A549 (cell line): ENCODE measurements at regions of chr12 and their contacts with region 1.

Region 1: GRCh38 chr12:109518820-109519665 is 41.6 kb downstream of the UBE3B start:
- DNase-seq: peak; percentile 48 to 80
- ATAC-seq: peak; percentile 64 to 91; a peak in 4 of 6 replicates
- H3K4me3 ChIP-seq: no peak overlapping the region
- H3K27ac ChIP-seq: no peak overlapping the region
- H3K4me1 ChIP-seq: no peaks in the 10 kb centered on the region
- CTCF ChIP-seq: peak; percentile 86
- EP300 ChIP-seq: no peak
- POLR2A ChIP-seq: no peak
- RAD21 ChIP-seq: peak; percentile 74 to 82

Region 2: GRCh38 chr12:109504068-109504467 is 15.0 kb before region 1 on chr12:
- CTCF ChIA-PET with region 1: interaction called, 33 read pairs
- POLR2A ChIA-PET with region 1: no interaction called
- DNase-seq: no peak
- ATAC-seq: no peak
- H3K4me3 ChIP-seq: no peak overlapping the region
- H3K27ac ChIP-seq: no peak overlapping the region
- H3K4me1 ChIP-seq: no peaks in the 10 kb centered on the region
- CTCF ChIP-seq: no peak
- EP300 ChIP-seq: no peak
- POLR2A ChIP-seq: no peak
- RAD21 ChIP-seq: no peak

Region 3: GRCh38 chr12:109763201-109763841 is 244.3 kb after region 1 on chr12:
- CTCF ChIA-PET with region 1: interaction called, 10 read pairs
- POLR2A ChIA-PET with region 1: no interaction called
- DNase-seq: peak in 1 of 2 experiments; percentile 60
- ATAC-seq: peak; percentile 53 to 64
- H3K4me3 ChIP-seq: no peak overlapping the region
- H3K27ac ChIP-seq: no peak overlapping the region
- H3K4me1 ChIP-seq: no peaks in the 10 kb centered on the region
- CTCF ChIP-seq: no peak
- EP300 ChIP-seq: no peak
- POLR2A ChIP-seq: no peak
- RAD21 ChIP-seq: no peak